Tibial artery (tissue), 4 donors: ENCODE measurements at regions of chr20 and their contacts with region 1.

Region 1: GRCh38 chr20:21361266-21361665 is 36.1 kb downstream of the NKX2-4 start:
- DNase-seq: no peak
- H3K4me3 ChIP-seq: no peak overlapping the region
- H3K27ac ChIP-seq: no peak overlapping the region
- H3K4me1 ChIP-seq: no peaks in the 10 kb centered on the region
- H3K27me3 ChIP-seq: no peaks in the 10 kb centered on the region
- CTCF ChIP-seq: no peak

Region 2: DNA sequence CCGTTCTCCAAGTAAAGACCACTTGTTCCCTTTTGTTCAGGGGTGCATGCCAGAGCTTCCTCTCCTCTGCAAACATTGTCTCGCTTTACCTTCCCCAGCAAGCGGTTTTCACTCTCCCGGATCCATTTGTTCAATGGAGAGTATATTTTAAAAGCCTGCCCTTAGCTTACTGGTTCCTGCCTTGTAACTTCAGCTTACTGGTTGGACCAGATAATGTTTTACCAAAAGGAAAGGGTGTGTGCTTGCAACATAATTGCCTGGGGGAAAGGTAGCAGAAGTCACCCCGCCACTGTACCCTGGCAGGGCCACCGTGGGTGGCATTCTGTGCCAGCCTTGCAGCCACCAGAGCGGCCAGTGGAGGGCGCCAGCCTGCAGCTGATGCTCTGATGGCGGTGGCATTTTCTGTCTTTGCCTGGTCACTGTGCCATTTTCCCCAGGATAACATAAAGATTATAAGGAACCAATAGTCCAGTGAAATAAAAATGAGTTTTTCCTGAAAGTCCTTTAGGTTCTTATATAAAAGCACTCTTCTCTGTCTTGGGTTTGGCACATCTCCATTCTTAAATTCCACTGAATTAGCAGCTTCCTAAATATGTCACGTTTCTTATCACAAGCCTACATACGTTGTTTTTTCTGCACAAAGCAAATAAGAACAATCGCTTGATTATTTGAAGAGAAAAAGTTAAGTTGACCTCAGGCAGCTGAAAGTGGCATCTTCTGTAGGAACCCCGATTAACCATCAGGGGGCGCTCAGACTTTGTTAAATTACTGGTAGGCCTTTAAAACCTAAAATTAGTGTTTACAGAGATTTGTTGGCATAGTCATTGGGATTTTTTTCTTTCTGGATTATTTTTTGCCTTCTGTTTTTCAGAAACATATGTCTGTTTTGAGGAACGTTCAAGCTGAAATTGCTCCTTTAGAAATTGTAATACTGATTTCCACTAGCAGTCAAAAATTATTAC is 125.5 kb before region 1 on chr20:
- intact Hi-C with region 1: loop called (anchors 10 kb)
- DNase-seq: peak in 1 of 2 donors; percentile 33
- H3K4me3 ChIP-seq: no peak overlapping the region
- H3K27ac ChIP-seq: no peak overlapping the region
- H3K4me1 ChIP-seq: peaks cover 0 to 7% (median 0%) of the 10 kb centered on the region in 4 donors
- H3K27me3 ChIP-seq: no peaks in the 10 kb centered on the region
- CTCF ChIP-seq: peak; percentile 64 to 68

Region 3: DNA sequence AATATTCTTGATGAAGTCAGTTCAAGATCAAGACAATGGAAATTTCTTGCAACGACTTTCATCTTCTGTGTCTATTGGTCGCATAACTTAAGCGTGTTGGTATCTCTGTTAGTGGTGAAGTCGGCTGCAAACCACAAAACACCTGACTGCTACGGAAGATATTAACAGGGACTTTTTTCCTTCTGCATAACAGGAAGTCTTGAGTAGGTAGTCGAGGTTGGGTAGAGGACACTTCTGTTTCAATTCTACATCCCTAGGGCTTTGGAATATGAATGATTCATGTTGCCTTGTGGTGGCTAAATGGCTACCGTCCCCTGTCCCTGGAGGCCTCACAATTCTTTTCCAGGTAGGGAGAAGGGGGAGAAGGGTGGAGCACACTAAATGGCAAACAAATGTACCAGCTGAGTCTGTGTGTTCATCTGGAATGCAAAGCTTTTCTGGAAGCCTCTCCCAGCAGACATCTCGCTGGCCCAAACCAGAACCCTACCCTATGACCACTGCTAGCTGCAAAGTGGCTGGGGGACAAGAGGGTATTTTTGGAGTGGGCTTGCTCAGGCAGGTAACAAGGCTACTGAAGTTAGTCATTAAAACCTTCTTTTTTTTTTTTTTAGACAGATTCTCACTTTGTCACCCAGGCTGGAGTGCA is 187.2 kb after region 1 on chr20:
- intact Hi-C with region 1: no loop called
- DNase-seq: no peak
- H3K4me3 ChIP-seq: no peak overlapping the region
- H3K27ac ChIP-seq: no peak overlapping the region
- H3K4me1 ChIP-seq: no peaks in the 10 kb centered on the region
- H3K27me3 ChIP-seq: peaks cover 0 to 5% of the 10 kb centered on the region in 2 donors
- CTCF ChIP-seq: no peak

Region 4: GRCh38 chr20:21653628-21654027 is 292.4 kb after region 1 on chr20:
- intact Hi-C with region 1: no loop called
- DNase-seq: no peak
- H3K4me3 ChIP-seq: no peak overlapping the region
- H3K27ac ChIP-seq: no peak overlapping the region
- H3K4me1 ChIP-seq: no peaks in the 10 kb centered on the region
- H3K27me3 ChIP-seq: no peaks in the 10 kb centered on the region
- CTCF ChIP-seq: no peak